ENCODE measurements at regions of chr17 and their contacts with region 1.

Region 1: GRCh38 chr17:7056386-7056785 is 12.5 kb upstream of the SLC16A11 start:
- DNase-seq: peak; percentile 86
- H3K4me3 ChIP-seq: no peak overlapping the region
- H3K27ac ChIP-seq: no peak overlapping the region
- H3K4me1 ChIP-seq: peaks cover 23% of the 10 kb centered on the region
- H3K27me3 ChIP-seq: no peaks in the 10 kb centered on the region
- CTCF ChIP-seq: no peak

Region 2: DNA sequence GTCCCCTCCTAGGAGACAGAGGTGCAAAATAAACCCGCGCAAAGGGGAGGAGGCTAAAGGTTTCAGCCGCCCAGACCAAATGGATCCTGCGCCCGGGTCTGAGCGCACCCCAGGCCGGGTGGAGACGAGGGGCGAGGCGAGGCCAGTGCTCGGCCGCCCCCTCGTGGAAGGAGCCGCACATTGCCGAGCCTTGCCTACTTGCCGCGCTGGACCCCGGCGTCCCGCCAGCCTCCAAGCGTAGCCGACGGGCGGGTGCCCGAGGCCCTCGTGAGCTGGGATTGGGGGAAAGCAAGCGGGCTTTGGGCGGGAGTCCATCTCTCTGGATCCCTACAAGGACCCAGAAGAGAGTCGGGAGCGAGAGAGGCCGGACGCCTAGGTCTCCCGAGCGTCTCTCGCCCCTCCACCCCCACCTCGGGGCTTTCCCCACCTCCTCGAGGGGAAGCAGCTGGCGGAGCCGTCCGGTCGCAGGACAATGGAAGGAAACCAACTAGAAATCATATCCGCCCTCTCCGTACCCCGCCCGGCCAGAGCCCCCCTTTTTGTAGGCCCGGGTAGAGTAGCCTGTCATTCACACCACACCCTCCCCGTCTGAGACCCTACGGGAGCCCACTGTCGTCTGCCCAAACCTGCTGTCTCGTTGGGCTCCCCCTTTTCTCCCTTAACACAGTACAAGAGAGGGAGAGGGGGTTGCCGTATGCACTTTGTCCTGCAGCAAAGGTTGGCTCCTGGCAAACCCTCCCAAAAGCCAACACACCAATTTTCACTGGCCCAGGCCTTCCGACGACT is 34.2 kb before region 1 on chr17:
- CTCF ChIA-PET with region 1: no interaction called
- dilution Hi-C with region 1: no loop called
- in situ Hi-C with region 1: no loop called
- intact Hi-C with region 1: no loop called
- DNase-seq: no peak
- H3K4me3 ChIP-seq: peak overlapping the region in 2 of 3 experiments; percentile 6 to 33
- H3K27ac ChIP-seq: no peak overlapping the region
- H3K4me1 ChIP-seq: peaks cover 7% of the 10 kb centered on the region
- H3K27me3 ChIP-seq: no peaks in the 10 kb centered on the region
- CTCF ChIP-seq: peak; percentile 70 to 94

Region 3: DNA sequence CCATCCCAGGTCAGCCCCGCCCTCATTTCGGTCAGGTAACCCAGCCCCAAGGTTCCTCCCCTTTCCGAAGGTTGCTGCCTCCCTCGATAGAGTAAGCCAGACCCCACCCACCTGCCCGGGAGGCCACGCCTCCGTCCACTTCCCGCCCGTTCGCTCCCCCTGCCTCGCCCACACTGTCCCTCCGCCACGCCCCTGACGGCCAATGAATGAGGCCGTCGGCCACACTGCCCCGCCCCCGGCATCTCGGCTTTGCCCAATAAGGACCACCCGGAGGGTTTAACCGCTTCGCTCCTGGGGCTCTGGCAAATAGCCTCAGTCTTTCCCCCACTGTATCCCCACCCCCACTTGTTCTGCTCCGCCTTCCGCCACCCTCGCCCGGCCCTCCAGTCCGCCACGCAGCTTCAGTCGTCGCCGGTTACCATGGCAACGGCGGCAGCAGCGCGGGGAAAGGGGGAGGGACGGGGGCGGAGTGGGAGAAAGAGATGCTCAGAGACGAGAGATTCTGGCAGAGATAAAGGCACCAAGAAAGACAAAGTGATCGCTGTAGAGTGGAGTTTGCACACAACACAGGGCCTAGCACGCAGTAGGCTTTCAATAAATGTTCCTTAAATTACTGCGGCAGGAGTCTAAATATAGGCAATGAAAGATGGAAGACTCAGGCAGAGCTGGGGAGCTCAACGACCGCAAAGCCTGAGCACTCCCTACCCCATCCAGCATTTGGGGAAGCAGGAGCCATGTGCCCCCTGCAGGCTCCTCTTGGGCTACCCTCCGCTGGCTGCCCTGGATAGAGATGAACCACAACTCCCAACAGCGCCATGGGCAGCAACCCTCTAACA is 158.1 kb after region 1 on chr17:
- CTCF ChIA-PET with region 1: no interaction called
- dilution Hi-C with region 1: no loop called
- in situ Hi-C with region 1: no loop called
- intact Hi-C with region 1: loop called (anchors 2 kb)
- DNase-seq: peak; percentile 95
- H3K4me3 ChIP-seq: peak overlapping the region; percentile 31 to 58 (median 39)
- H3K27ac ChIP-seq: peak overlapping the region; percentile 66
- H3K4me1 ChIP-seq: peaks cover 10% of the 10 kb centered on the region
- H3K27me3 ChIP-seq: no peaks in the 10 kb centered on the region
- CTCF ChIP-seq: peak; percentile 45 to 74

Measured in mammary epithelial cell (primary cell).